ENCODE measurements at regions of chr9 and their contacts with region 1.

Region 1: GRCh38 chr9:6055213-6055612 is 39.8 kb upstream of the RANBP6 start:
- DNase-seq: peak; percentile 22

Region 2: DNA sequence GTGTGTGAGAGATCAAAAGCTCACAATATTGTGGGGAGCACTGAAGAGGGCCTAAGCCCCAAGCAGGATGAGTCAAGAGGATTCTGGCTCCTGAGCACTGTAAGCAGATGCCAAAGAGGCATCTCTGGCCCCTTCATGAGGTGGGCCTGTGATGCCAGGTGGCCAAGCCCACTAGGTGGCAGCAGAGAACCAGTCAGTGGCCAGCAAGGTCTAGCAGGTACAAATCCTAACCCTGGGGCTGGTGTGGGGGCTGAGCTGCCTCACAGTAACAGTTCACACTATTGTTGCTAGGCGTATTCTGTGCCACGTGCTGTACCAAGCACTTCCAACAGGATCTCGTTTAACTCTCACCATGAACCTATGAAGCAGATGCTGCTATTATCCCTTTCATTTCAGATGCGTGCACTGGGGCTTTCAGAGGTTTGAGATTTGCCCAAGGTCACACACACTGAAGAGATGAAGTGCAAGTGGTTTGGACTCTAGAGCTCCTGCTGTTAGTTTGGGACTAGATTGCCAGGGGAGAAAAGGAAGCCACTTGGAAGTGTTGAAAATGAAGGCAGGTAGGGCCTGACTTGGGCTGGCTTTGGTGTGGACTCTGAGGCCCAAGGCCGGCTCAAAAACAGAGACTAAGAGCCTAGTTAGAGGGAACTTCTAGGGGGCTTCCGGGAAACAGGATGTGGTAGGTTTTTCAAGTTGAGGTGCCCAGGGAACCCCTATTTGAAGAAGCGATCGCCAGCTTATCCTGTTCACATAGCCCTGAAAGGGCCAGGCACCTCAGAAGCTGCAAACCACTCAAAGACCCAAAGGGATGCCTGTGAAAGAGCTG is 168.9 kb before region 1 on chr9:
- CTCF ChIA-PET with region 1: interaction called, 24 read pairs
- POLR2A ChIA-PET with region 1: no interaction called
- DNase-seq: peak; percentile 73

Region 3: DNA sequence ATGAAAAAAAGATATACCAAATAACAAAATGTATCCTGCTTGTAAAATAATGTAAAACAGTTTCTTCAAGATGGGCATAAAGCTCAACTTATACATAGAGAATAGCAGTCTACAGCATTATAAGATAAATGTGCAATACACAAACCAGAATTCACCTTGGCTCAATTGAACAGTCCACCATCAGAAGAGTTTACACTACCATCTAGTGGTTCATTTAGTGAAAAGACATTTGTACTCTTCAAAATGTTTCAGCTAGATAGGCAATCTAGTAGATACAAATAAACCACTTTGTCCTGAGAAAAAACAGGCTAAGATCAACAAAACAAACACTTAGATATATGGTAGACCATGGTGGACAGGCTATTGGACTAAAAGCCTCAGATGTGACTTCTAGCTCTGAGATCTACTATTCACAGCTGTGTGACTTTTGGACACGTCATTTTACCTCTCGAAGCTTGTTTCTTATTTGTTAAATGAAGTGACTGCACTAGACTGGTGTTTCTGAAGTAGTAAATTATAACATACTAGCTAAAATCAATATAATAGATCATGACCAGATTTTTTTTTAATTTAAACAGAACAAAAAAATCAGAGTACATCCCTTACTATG is 250.8 kb after region 1 on chr9:
- CTCF ChIA-PET with region 1: interaction called, 12 read pairs
- POLR2A ChIA-PET with region 1: no interaction called
- DNase-seq: peak; percentile 16

Measured in HEK293T (cell line).